PC-3 (cell line): ENCODE measurements at regions of chr2 and their contacts with region 1.

Region 1: GRCh38 chr2:36858551-36859365 is 107.6 kb downstream of the STRN start:
- DNase-seq: no peak
- ATAC-seq: no peak
- H3K4me3 ChIP-seq: no peak overlapping the region
- H3K27ac ChIP-seq: no peak overlapping the region
- H3K4me1 ChIP-seq: no peaks in the 10 kb centered on the region
- H3K27me3 ChIP-seq: no peaks in the 10 kb centered on the region
- CTCF ChIP-seq: no peak

Region 2: GRCh38 chr2:36918307-36918706 is 59.5 kb after region 1 on chr2:
- CTCF ChIA-PET with region 1: no interaction called
- POLR2A ChIA-PET with region 1: no interaction called
- intact Hi-C with region 1: loop called (anchors 5 kb)
- DNase-seq: peak; percentile 13
- ATAC-seq: no peak
- H3K4me3 ChIP-seq: no peak overlapping the region
- H3K27ac ChIP-seq: no peak overlapping the region
- H3K4me1 ChIP-seq: 0 out of 2 replicates have a peak, but pooled peaks cover 2% of the 10 kb centered on the region
- H3K27me3 ChIP-seq: no peaks in the 10 kb centered on the region
- CTCF ChIP-seq: peak; percentile 37; the same call in 1 of the 2 replicates

Region 3: GRCh38 chr2:38095996-38096861 is 1237.5 kb after region 1 on chr2:
- CTCF ChIA-PET with region 1: no interaction called
- POLR2A ChIA-PET with region 1: no interaction called
- intact Hi-C with region 1: no loop called
- DNase-seq: peak; percentile 94
- ATAC-seq: peak; percentile 70
- H3K4me3 ChIP-seq: no peak overlapping the region
- H3K27ac ChIP-seq: peak overlapping the region; percentile 93
- H3K4me1 ChIP-seq: peaks cover 33% of the 10 kb centered on the region
- H3K27me3 ChIP-seq: no peaks in the 10 kb centered on the region
- CTCF ChIP-seq: no peak